Psoas muscle (tissue), 8 donors: ENCODE measurements at regions of chr5 and their contacts with region 1.

Region 1: GRCh38 chr5:34486160-34486848 is 169.8 kb upstream of the RAI14 start:
- DNase-seq: peak; percentile 69 to 81
- ATAC-seq: peak; percentile 57 to 79 (median 62)
- H3K4me3 ChIP-seq: no peak overlapping the region
- H3K27ac ChIP-seq: no peak overlapping the region
- H3K4me1 ChIP-seq: no peaks in the 10 kb centered on the region
- H3K27me3 ChIP-seq: peaks cover 0 to 3% (median 0%) of the 10 kb centered on the region in 3 donors
- CTCF ChIP-seq: peak; percentile 79

Region 2: GRCh38 chr5:34464830-34465229 is 21.5 kb before region 1 on chr5:
- intact Hi-C with region 1: no loop called
- DNase-seq: no peak
- ATAC-seq: no peak
- H3K4me3 ChIP-seq: no peak overlapping the region
- H3K27ac ChIP-seq: no peak overlapping the region
- H3K4me1 ChIP-seq: no peaks in the 10 kb centered on the region
- H3K27me3 ChIP-seq: no peaks in the 10 kb centered on the region
- CTCF ChIP-seq: no peak

Region 3: DNA sequence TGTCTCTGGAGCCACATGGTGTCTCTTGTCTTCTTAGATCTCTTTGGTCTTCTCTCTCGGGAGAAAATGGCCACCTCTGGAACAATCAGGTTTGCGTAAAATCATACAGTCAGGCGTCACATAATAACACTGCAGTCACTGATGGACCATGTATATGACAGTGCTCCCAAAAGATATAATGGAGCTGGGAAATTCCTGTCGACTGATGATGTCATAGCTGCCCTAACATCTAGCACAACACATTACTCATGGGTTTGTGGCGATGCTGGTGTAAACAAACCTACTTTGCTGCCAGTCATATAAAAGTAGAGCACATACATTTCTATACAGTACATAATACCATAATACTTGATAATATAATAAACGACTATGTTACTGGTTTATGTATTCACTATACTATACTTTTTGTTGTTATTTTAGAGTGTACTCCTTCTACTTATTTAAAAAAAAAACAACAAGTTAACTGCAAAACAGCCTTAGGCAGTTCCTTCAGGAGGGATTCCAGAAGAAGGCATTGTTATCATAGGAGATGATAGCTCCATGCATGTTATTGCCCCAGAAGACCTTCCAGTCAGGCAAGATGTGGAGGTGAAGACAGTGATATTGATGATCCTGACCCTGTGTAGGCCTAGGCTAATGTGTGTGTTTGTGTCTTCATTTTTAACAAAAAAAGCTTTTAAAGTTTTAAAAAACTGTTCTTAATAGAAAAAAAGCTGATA is 139.9 kb after region 1 on chr5:
- intact Hi-C with region 1: loop called in 1 of 2 experiments (anchors 5 kb)
- DNase-seq: no peak
- ATAC-seq: no peak
- H3K4me3 ChIP-seq: no peak overlapping the region
- H3K27ac ChIP-seq: no peak overlapping the region
- H3K4me1 ChIP-seq: no peaks in the 10 kb centered on the region
- H3K27me3 ChIP-seq: no peaks in the 10 kb centered on the region
- CTCF ChIP-seq: no peak

Region 4: DNA sequence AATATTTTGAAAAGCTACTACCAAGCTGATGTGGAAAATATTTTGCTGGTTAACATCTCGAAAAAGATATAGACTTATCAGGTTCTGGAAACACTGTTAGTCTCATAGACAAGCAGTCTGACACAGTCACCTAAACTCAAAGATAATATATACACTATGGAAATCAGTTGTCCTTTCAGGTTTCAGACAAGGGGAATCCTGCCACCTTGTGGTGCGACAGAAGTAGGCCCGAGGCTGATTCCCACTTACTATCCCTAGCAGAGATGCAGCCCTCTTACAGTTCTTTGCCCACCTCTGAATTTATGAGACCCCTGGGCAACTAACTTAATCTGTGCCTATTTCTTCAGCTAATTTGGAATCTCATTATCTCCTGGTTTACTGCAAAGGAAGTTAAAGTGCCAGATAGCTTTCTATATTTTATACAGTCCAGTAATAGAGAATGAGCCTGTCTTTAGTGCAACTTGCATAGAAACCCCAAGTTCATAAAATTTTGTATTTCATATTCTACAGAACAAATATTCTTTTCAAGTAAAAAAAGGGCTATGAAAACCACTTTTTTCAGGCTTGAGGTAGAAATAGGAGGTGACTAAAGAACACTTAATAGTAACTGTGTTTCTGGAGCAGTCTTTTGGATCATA is 412.1 kb after region 1 on chr5:
- intact Hi-C with region 1: loop called (anchors 2 to 5 kb)
- DNase-seq: peak; percentile 39 to 56
- ATAC-seq: peak; percentile 51 to 84 (median 62)
- H3K4me3 ChIP-seq: no peak overlapping the region
- H3K27ac ChIP-seq: no peak overlapping the region
- H3K4me1 ChIP-seq: no peaks in the 10 kb centered on the region
- H3K27me3 ChIP-seq: no peaks in the 10 kb centered on the region
- CTCF ChIP-seq: peak; percentile 81

Region 5: DNA sequence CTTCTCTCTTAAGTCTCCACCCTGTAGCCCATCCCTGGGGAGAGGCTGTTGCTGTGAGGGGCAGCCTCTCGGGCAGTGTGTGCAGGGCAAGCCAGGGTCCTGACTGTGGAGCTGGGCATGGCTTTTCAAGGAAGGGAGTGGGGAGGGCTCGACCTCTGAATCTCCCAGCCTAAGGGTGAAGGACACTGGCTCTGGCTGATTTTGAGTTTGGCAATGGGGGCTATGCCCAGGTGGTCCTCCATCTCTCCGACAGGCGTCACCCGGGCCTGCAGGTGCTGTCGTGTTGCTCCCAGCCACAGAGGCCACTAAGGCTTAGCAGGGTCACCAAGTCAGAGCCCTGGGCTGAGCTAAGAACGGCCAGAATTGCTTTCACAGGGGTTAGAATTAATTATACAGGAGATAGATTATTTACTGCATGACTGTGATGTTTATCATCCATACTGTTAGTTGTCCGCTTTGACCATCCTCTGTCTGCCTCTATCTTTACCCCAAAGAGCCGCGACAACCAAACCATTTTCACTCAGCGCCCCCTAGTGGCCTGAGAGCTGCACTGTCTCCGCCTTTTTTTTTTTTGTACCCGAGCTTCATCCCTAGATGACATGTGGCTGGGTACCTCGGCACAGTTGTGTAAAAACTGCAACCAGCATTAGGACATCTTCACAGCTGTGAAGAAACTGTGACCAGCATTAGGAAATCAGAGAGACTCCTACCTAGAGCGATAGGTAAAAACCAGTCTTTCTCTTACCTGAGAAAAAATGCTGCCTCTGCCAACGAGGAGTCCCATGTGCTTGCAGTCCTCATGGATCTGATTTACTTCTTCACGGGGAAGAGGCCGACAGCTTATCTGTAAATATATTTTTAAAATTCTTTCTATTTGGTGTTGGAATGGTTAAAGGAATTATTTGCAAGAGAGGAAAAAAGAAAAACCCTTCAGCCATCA is 517.0 kb after region 1 on chr5:
- intact Hi-C with region 1: loop called in 1 of 2 experiments (anchors 10 kb)
- DNase-seq: peak; percentile 43 to 57
- ATAC-seq: peak; percentile 32 to 62 (median 58)
- H3K4me3 ChIP-seq: no peak overlapping the region
- H3K27ac ChIP-seq: no peak overlapping the region
- H3K4me1 ChIP-seq: no peaks in the 10 kb centered on the region
- H3K27me3 ChIP-seq: peaks cover 0 to 4% (median 0%) of the 10 kb centered on the region in 3 donors
- CTCF ChIP-seq: peak; percentile 76